ENCODE measurements at regions of chr11 and their contacts with region 1.

Region 1: DNA sequence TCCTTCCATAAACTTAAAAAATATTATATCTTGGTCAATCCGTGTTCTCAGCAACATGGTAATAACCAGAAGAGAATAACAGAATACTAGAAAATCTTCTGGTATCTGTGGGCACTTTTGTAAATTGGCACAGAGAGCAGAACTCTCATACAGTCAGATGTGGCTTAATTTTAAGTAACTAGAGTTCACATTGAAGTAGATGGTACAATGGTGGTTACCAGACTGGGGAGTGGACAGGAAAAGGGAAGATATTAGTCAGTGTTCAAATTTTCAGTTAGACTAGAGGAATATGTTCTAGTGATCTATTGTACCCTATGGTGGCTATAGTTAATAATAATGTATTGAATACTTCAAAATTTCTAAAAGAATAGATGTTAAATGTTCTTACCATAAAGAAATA is 6.9 kb downstream of the OR52H1 start:
- DNase-seq: no peak
- ATAC-seq: no peak
- H3K4me3 ChIP-seq: no peak overlapping the region
- H3K27ac ChIP-seq: no peak overlapping the region
- H3K4me1 ChIP-seq: no peaks in the 10 kb centered on the region
- H3K27me3 ChIP-seq: no peaks in the 10 kb centered on the region; a peak in 1 of 5 replicates
- CTCF ChIP-seq: no peak
- EP300 ChIP-seq: no peak
- POLR2A ChIP-seq: no peak
- RAD21 ChIP-seq: no peak

Region 2: DNA sequence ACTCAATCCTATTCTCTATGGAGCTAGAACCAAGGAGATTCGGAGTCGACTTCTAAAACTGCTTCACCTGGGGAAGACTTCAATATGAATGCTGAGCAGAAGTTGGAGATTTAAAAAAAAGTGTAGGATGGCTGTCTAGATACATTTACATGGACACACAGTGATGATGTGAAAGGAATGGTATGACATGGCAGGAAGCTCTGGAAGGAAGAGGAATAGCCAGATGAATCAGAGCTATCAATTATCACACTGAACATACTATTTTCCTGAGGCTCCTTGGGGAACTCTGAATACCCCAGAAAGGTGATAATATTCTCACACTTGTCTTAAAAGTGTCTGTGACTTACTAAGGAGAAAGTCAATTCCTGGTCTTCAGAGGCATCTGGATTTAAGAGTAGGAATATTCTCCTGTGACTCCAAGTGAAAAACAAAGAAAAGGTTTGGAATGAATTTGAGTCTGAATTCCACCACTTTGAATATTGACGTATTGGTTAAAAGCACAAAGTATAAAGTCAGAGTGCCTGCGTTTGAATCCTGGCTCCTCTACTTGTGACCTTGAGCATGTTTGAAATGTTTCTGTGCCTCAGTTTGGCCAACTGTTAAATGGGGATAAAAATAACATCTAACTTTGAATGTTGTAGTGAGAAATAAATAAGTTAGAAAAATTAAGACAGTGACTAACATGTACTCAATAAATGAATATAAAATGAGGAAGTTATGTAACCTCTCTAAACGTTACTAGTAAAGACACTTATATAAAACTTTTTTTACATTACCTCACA is 51.7 kb before region 1 on chr11:
- CTCF ChIA-PET with region 1: no interaction called
- POLR2A ChIA-PET with region 1: no interaction called
- in situ Hi-C with region 1: no loop called
- intact Hi-C with region 1: loop called (anchors 1 kb)
- DNase-seq: no peak
- ATAC-seq: no peak
- H3K4me3 ChIP-seq: no peak overlapping the region
- H3K27ac ChIP-seq: no peak overlapping the region
- H3K4me1 ChIP-seq: no peaks in the 10 kb centered on the region
- H3K27me3 ChIP-seq: 0 out of 5 replicates have a peak, but pooled peaks cover 0 to 2% of the 10 kb centered on the region in 2 experiments
- CTCF ChIP-seq: no peak
- EP300 ChIP-seq: no peak
- POLR2A ChIP-seq: no peak
- RAD21 ChIP-seq: no peak

Region 3: DNA sequence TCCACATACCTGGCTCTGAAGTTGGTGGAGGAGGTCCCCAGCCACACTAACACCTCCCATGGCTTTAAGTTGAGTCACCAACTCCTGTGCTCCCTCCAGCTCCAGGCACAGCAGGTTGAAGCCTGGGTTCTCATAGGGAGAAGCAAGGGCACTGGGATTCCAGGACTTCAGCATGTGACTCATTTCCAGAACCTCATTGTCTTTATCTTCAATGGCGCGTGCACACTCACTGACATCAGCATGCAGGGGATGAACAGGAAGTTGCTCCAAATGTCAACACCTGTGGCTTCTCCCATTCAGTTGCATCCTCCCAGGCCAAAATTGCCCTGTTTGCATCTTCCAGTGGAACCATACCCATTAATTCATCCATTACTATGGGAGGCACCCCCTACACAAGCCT is 19.1 kb before region 1 on chr11:
- CTCF ChIA-PET with region 1: no interaction called
- POLR2A ChIA-PET with region 1: no interaction called
- in situ Hi-C with region 1: no loop called
- intact Hi-C with region 1: no loop called
- DNase-seq: no peak
- ATAC-seq: no peak
- H3K4me3 ChIP-seq: no peak overlapping the region
- H3K27ac ChIP-seq: no peak overlapping the region
- H3K4me1 ChIP-seq: no peaks in the 10 kb centered on the region
- H3K27me3 ChIP-seq: peaks cover 0 to 12% of the 10 kb centered on the region in 2 experiments; a peak in 3 of 5 replicates
- CTCF ChIP-seq: no peak
- EP300 ChIP-seq: no peak
- POLR2A ChIP-seq: no peak
- RAD21 ChIP-seq: no peak

Measured in HepG2 (cell line).